WTC11 (cell line): ENCODE measurements at regions of chr16 and their contacts with region 1.

Region 1: GRCh38 chr16:5056352-5056751 is 9.4 kb downstream of the C16orf89 start:
- DNase-seq: peak; percentile 80
- ATAC-seq: peak; percentile 76
- H3K4me3 Mint-ChIP-seq: no peak overlapping the region
- H3K27ac Mint-ChIP-seq: no peak overlapping the region
- H3K4me1 Mint-ChIP-seq: peaks cover 20% of the 10 kb centered on the region
- H3K27me3 Mint-ChIP-seq: peaks cover 2% of the 10 kb centered on the region; the same call in 1 of the 2 replicates
- CTCF ChIP-seq: peak; percentile 66

Region 2: GRCh38 chr16:5025171-5025632 is 31.1 kb before region 1 on chr16:
- CTCF ChIA-PET with region 1: interaction called, 21 read pairs
- POLR2A ChIA-PET with region 1: interaction called, 3 read pairs
- DNase-seq: peak; percentile 85
- ATAC-seq: peak; percentile 93
- H3K4me3 Mint-ChIP-seq: no peak overlapping the region
- H3K27ac Mint-ChIP-seq: no peak overlapping the region
- H3K4me1 Mint-ChIP-seq: no peaks in the 10 kb centered on the region
- H3K27me3 Mint-ChIP-seq: no peaks in the 10 kb centered on the region
- CTCF ChIP-seq: peak; percentile 45; the same call in 1 of the 2 replicates

Region 3: GRCh38 chr16:5033256-5034169 is 22.8 kb before region 1 on chr16 and contains the start of gene NAGPA:
- CTCF ChIA-PET with region 1: interaction called, 19 read pairs
- POLR2A ChIA-PET with region 1: interaction called, 3 read pairs
- DNase-seq: peak; percentile 89
- ATAC-seq: peak; percentile 64
- H3K4me3 Mint-ChIP-seq: peak within 1 kb of the TSS; percentile 72
- H3K27ac Mint-ChIP-seq: peak within 1 kb of the TSS; percentile 24
- H3K4me1 Mint-ChIP-seq: peaks cover 30% of the 10 kb centered on the region
- H3K27me3 Mint-ChIP-seq: no peaks in the 10 kb centered on the region
- CTCF ChIP-seq: no peak
- total RNA-seq, gene NAGPA: 9.3 to 12.5 TPM (median 10.7 TPM) in 3 replicates

Region 4: GRCh38 chr16:5041600-5042133 is 14.7 kb before region 1 on chr16:
- CTCF ChIA-PET with region 1: interaction called, 19 read pairs
- POLR2A ChIA-PET with region 1: interaction called, 3 read pairs
- DNase-seq: no peak
- ATAC-seq: no peak
- H3K4me3 Mint-ChIP-seq: no peak overlapping the region
- H3K27ac Mint-ChIP-seq: no peak overlapping the region
- H3K4me1 Mint-ChIP-seq: peaks cover 10% of the 10 kb centered on the region
- H3K27me3 Mint-ChIP-seq: peaks cover 10% of the 10 kb centered on the region
- CTCF ChIP-seq: no peak

Region 5: GRCh38 chr16:5071681-5072333 is 15.5 kb after region 1 on chr16 and contains the start of gene ALG1:
- CTCF ChIA-PET with region 1: interaction called, 24 read pairs
- POLR2A ChIA-PET with region 1: no interaction called
- DNase-seq: peak; percentile 88
- ATAC-seq: peak; percentile 82
- H3K4me3 Mint-ChIP-seq: peak within 1 kb of the TSS; percentile 93
- H3K27ac Mint-ChIP-seq: 0 out of 2 replicates have a peak within 1 kb of the TSS, but pooled peaks have one; percentile 63
- H3K4me1 Mint-ChIP-seq: peaks cover 12% of the 10 kb centered on the region
- H3K27me3 Mint-ChIP-seq: peaks cover 3% of the 10 kb centered on the region; the same call in 1 of the 2 replicates
- CTCF ChIP-seq: no peak
- total RNA-seq, gene ALG1: 25.7 to 31.4 TPM (median 26.2 TPM) in 3 replicates